Dorsolateral prefrontal cortex (tissue), 120 donors: ENCODE measurements at regions of chrX and their contacts with region 1.

Region 1: DNA sequence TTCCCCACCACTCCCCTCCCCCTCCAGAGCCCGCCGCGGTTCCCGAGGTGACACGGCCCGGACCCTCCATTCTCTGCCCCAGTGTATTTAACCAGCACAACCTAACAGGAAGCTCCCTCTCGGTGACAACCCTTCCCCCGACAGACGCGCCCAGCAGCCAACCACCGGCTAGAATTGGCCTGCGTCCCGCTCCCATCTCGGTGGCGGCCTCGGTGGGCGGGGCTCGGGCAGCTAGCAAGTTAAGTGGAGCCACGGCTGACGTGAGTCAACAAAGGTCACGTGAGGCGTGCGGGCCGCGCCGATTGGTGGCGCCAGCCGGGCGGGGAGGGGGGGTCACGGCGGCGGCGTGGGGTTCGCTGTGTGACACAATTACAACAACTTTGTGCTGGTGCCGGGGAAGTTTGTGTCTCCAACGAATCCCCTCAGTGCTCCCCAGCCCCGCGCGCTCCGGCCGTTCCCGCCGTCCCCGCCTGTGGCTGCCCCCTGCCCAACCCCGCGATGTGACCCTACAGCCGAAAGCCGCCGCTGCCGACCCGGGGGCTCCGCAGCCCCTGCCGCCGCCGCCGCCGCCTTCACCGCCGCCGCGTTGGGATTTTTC is at the start of gene KDM6A:
- DNase-seq: peak; percentile 99 to 100 (median 100)
- H3K4me3 ChIP-seq: peak within 1 kb of the TSS; percentile 56 to 98 (median 91)
- H3K27ac ChIP-seq: peak within 1 kb of the TSS; percentile 87 to 100 (median 98)
- H3K27me3 ChIP-seq: no peaks in the 10 kb centered on the region
- CTCF ChIP-seq: peak in 3 of 56 donors; percentile 3 to 19 (median 10)
- total RNA-seq, gene KDM6A: 18.4 to 72.2 (median 34.4) TPM

Region 2: DNA sequence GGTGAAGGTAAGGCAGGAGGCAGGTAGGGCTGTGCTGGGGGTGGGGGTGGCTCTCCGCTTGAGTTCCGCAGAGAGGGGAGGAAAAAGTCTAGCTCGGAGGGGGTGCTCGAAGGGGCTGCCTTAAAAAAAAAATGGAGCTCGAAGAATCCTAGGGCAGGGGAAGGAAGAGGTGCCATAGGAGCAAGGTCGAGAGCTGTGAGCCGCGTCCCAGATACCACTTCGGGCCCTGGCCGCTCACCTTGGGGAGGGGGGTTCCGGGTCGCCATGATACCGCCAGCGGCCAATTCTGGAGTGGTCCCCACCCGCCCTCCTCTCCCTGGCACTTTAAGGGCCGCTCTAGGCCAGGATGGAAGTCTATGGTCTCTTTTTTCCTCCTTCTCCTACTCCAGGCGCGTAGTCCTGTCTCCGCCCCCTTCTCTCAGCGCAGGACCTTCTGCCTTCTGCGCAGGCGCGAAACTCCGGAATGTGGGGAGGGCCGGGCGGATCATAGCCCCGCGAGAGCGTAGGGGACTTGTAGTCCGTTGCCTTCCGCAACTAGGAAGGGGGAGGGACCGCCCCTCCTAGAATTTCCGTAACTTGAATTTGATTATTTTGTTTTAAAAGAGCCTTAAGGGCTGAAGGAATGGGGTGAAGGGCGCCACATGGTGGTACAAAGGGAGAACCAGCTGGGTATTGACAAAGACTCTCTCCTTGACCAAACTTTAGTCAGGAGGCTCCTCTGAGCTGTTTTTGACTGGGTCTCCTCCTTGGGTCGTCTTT is 330.2 kb before region 1 on chrX and contains the start of gene FUNDC1:
- intact Hi-C with region 1: loop called in 1 of 2 experiments (anchors 5 kb)
- DNase-seq: peak; percentile 76 to 91 (median 87)
- H3K4me3 ChIP-seq: peak within 1 kb of the TSS; percentile 39 to 83 (median 68)
- H3K27ac ChIP-seq: peak within 1 kb of the TSS in 52 of 59 donors; percentile 10 to 86 (median 67)
- H3K27me3 ChIP-seq: peaks cover 0 to 33% (median 0%) of the 10 kb centered on the region in 45 donors
- CTCF ChIP-seq: peak in 53 of 56 donors; percentile 16 to 63 (median 43)
- total RNA-seq, gene FUNDC1: 12.6 to 37.6 (median 26.6) TPM

Region 3: DNA sequence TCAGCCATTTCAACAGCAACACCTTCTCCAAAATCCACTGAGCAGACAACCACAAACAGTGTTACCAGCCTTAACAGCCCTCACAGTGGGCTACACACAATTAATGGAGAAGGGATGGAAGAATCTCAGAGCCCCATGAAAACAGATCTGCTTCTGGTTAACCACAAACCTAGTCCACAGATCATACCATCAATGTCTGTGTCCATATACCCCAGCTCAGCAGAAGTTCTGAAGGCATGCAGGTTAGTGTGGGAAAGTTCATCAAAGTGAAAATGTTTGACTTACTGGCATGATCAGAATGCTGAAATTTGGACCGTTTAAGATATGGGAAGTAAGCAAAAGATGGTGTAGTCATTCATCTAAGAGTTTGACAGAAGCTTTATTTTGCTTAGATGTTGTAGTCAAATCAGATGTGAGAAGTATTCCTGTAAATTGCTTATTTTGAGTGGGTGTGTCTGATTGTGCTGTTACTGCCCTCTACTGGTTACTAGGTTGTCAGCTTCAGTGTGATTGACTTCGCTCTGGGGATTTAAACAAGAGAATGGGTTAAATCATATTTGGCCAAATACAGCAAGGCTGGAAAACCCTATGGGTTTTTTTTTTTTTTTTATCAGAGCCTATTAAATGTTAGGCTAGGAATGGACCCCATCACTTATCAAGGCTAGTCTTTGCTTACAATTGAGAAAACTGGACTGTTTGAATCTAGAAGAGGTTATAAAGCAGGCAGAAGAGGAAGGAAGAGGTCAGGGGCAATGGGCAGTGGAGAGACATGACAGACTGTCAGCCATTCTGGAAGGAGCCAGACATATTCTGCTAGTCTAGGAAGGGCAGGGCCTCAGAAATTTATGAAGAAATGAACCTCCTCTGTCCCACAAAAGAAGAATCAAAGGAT is 197.4 kb after region 1 on chrX:
- intact Hi-C with region 1: loop called (anchors 5 kb)
- DNase-seq: peak in 1 of 10 donors; percentile 15
- H3K4me3 ChIP-seq: no peak overlapping the region
- H3K27ac ChIP-seq: peak overlapping the region in 39 of 59 donors; percentile 0 to 80 (median 49)
- H3K27me3 ChIP-seq: no peaks in the 10 kb centered on the region
- CTCF ChIP-seq: peak; percentile 22 to 80 (median 69)

Region 4: GRCh38 chrX:45142185-45142584 is 269.3 kb after region 1 on chrX:
- intact Hi-C with region 1: loop called in 1 of 2 experiments (anchors 5 kb)
- DNase-seq: no peak
- H3K4me3 ChIP-seq: no peak overlapping the region
- H3K27ac ChIP-seq: peak overlapping the region in 58 of 59 donors; percentile 65 to 100 (median 95)
- H3K27me3 ChIP-seq: peaks cover 0 to 21% (median 0%) of the 10 kb centered on the region in 45 donors
- CTCF ChIP-seq: no peak